ENCODE measurements at regions of chr17 and their contacts with region 1.

Region 1: DNA sequence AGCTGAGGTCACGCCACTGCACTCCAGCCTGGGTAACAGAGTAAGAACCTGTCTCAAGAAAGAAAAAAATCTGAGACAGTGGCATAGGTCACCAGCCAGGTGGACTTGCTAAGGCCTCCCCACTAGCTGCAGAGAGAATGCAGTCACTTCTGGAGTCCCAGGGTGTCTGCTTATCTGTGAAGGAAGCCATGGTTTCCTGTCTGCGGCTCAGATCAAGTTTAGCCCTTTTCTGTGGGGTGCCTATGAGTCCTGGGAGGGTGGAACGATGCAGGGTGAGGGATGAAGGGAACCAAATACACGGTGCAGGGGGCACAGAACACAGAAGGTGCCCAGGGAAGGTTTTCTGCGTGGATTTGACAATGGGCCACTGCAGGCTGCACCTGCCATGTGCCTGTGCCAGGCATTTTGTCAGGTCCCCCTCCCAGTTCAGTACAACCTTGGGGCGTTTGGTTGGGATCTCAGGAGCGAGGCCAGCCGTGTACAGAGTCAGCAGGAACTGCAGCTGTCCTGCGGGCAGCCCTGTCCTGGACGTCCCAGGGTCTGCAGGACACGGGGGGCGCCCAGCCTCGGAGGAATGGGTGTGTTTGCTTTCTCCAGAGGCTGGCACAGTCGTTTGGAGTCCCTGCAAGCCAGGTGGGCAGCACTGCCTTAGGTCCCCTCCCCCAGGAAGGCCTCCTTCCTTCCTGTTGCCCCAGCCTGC is 41.8 kb downstream of the RAB11FIP4 start:
- DNase-seq: peak in 1 of 5 donors; percentile 63
- H3K4me3 ChIP-seq: no peak overlapping the region
- H3K27ac ChIP-seq: no peak overlapping the region
- H3K4me1 ChIP-seq: peaks cover 0 to 3% (median 0%) of the 10 kb centered on the region in 3 donors
- H3K27me3 ChIP-seq: no peaks in the 10 kb centered on the region
- CTCF ChIP-seq: no peak

Region 2: GRCh38 chr17:31327534-31328159 is 105.6 kb before region 1 on chr17:
- intact Hi-C with region 1: no loop called
- DNase-seq: no peak
- H3K4me3 ChIP-seq: no peak overlapping the region
- H3K27ac ChIP-seq: no peak overlapping the region
- H3K4me1 ChIP-seq: no peaks in the 10 kb centered on the region
- H3K27me3 ChIP-seq: no peaks in the 10 kb centered on the region
- CTCF ChIP-seq: no peak

Region 3: GRCh38 chr17:31517524-31517923 is 84.3 kb after region 1 on chr17:
- intact Hi-C with region 1: loop called (anchors 10 kb)
- DNase-seq: no peak
- H3K4me3 ChIP-seq: no peak overlapping the region
- H3K27ac ChIP-seq: no peak overlapping the region
- H3K4me1 ChIP-seq: peaks cover 0 to 8% (median 5%) of the 10 kb centered on the region in 3 donors
- H3K27me3 ChIP-seq: no peaks in the 10 kb centered on the region
- CTCF ChIP-seq: no peak

Region 4: DNA sequence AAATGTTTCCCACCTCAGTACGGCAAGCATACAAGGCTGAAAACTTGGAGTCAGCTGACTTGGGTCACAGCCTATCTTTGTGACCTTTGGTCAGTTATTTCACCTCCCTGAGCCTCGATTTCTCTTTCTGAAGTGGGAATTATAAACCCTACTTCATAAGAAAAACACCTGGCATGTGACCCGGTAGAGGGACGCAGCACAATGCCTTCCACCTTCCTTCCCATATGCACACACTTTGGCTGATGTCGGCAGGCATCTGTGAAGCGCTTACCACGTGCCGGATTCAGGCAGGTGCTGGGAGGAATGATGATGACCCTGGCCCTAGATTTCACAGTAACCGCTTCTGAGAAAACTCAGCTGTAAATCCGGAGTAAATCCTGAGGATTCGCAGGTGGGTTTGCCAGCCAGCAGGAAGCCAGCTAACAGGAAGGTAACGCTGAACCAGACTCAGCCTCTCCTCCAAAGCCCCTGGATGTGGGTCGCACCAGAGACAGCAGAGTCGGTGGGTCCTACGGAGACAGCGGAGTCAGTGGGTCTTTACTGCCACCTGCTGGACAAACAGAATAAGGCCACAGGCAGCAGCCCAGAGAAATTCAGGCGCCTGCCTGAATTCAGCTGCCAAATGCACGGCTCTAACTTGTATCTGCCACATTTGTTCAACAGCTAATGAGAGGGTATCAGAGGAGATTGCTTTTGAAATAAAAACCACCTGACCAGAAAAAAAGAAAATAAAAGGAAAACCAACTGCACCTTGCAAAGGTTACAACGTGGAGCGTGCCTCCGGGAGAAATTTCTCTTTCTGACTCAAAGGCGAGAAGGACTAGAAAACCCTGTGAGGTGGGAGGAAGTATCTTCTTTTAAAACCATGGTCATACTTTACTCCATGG is 409.2 kb after region 1 on chr17:
- intact Hi-C with region 1: loop called (anchors 10 kb)
- DNase-seq: peak; percentile 76 to 93 (median 88)
- H3K4me3 ChIP-seq: peak overlapping the region in 2 of 3 donors; percentile 47 to 57
- H3K27ac ChIP-seq: no peak overlapping the region
- H3K4me1 ChIP-seq: peaks cover 0 to 14% (median 11%) of the 10 kb centered on the region in 3 donors
- H3K27me3 ChIP-seq: no peaks in the 10 kb centered on the region
- CTCF ChIP-seq: peak; percentile 91

Measured in kidney (tissue), 22 donors.